ENCODE measurements at regions of chr6 and their contacts with region 1.

Region 1: GRCh38 chr6:42390228-42390934 is 61.3 kb downstream of the TRERF1 start:
- DNase-seq: peak in 8 of 9 donors; percentile 69 to 90 (median 82)
- ATAC-seq: peak; percentile 88
- H3K4me3 ChIP-seq: peak overlapping the region; percentile 50
- H3K4me3 Mint-ChIP-seq: peak overlapping the region; percentile 71 to 87 (median 84)
- H3K27ac ChIP-seq: peak overlapping the region; percentile 85
- H3K27ac Mint-ChIP-seq: peak overlapping the region; percentile 97 to 100 (median 99)
- H3K4me1 ChIP-seq: peaks cover 89% of the 10 kb centered on the region in 2 donors
- H3K4me1 Mint-ChIP-seq: peaks cover 75 to 100% (median 96%) of the 10 kb centered on the region in 7 donors
- H3K27me3 ChIP-seq: no peaks in the 10 kb centered on the region
- H3K27me3 Mint-ChIP-seq: no peaks in the 10 kb centered on the region

Region 2: DNA sequence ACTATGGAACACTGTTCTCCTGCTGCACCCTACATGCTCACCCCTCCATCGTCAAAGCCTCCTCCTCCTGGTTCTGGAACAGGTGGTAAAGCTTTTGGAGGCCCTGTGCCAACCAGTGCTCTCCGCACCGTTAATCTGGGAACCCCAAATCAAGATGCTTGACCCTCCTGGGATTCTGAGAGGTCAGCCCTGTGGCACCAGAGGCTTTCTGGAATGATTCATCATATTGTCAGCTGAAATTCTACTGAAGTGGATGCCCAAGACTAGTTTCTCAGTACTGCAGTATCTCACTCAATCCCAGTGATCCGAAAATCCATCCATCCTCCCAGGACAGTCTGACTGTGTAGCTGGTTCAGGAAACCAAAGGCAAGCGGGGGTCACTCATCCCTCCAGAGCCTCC is 31.4 kb before region 1 on chr6:
- CTCF ChIA-PET with region 1: interaction called, 4 read pairs
- POLR2A ChIA-PET with region 1: interaction called, 5 read pairs
- intact Hi-C with region 1: loop called in 1 of 2 experiments (anchors 5 kb)
- DNase-seq: no peak
- ATAC-seq: no peak
- H3K4me3 ChIP-seq: no peak overlapping the region
- H3K4me3 Mint-ChIP-seq: no peak overlapping the region
- H3K27ac ChIP-seq: no peak overlapping the region
- H3K27ac Mint-ChIP-seq: no peak overlapping the region
- H3K4me1 ChIP-seq: peaks cover 0 to 18% of the 10 kb centered on the region in 2 donors
- H3K4me1 Mint-ChIP-seq: peaks cover 1 to 36% (median 3%) of the 10 kb centered on the region in 7 donors
- H3K27me3 ChIP-seq: no peaks in the 10 kb centered on the region
- H3K27me3 Mint-ChIP-seq: no peaks in the 10 kb centered on the region

Region 3: DNA sequence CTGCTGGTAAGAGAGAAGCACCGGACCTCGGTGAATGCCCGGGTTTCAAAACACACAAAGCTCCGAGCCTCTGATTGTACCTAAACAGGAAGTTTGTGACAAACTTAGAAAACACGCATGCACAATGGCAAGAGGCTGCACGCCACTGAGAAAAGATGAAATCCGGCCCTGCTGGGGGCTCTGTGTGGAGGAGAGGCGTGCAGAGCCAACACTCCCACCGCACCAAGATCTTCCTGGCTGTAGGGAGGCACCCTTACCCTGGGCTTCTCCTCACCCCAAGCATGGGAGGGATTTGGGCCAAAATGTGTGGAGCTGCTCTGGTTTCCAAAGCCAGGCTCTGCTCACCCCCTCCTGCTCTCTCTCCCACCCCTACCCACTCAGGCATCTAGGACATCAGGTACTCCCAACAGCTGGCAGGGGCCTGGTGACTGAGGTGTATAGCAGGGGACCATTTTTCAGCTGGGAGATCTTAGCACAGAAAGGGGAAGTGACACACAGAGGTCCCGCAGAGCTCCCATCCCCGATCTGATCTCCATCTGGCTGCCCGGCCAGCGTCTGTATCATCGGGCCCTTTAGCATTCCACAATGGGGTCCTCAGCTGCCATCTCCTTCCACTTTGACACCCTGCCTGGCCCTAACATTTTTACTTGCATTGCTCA is 22.9 kb before region 1 on chr6:
- CTCF ChIA-PET with region 1: interaction called, 20 read pairs
- POLR2A ChIA-PET with region 1: interaction called, 114 read pairs
- intact Hi-C with region 1: loop called (anchors 1 kb)
- DNase-seq: peak in 4 of 9 donors; percentile 22 to 35 (median 32)
- ATAC-seq: peak; percentile 70
- H3K4me3 ChIP-seq: peak overlapping the region; percentile 42
- H3K4me3 Mint-ChIP-seq: peak overlapping the region; percentile 68 to 87 (median 80)
- H3K27ac ChIP-seq: peak overlapping the region; percentile 58
- H3K27ac Mint-ChIP-seq: peak overlapping the region; percentile 80 to 98 (median 94)
- H3K4me1 ChIP-seq: peaks cover 48 to 68% of the 10 kb centered on the region in 2 donors
- H3K4me1 Mint-ChIP-seq: peaks cover 63 to 84% (median 73%) of the 10 kb centered on the region in 7 donors
- H3K27me3 ChIP-seq: no peaks in the 10 kb centered on the region
- H3K27me3 Mint-ChIP-seq: no peaks in the 10 kb centered on the region

Region 4: GRCh38 chr6:42374018-42374659 is 16.2 kb before region 1 on chr6:
- CTCF ChIA-PET with region 1: interaction called, 38 read pairs
- POLR2A ChIA-PET with region 1: interaction called, 114 read pairs
- intact Hi-C with region 1: loop called in 1 of 2 experiments (anchors 1 kb)
- DNase-seq: no peak
- ATAC-seq: peak; percentile 58
- H3K4me3 ChIP-seq: no peak overlapping the region
- H3K4me3 Mint-ChIP-seq: peak overlapping the region; percentile 13 to 67 (median 53)
- H3K27ac ChIP-seq: no peak overlapping the region
- H3K27ac Mint-ChIP-seq: peak overlapping the region; percentile 61 to 94 (median 85)
- H3K4me1 ChIP-seq: peaks cover 36 to 63% of the 10 kb centered on the region in 2 donors
- H3K4me1 Mint-ChIP-seq: peaks cover 56 to 78% (median 64%) of the 10 kb centered on the region in 7 donors
- H3K27me3 ChIP-seq: no peaks in the 10 kb centered on the region
- H3K27me3 Mint-ChIP-seq: no peaks in the 10 kb centered on the region

Region 5: DNA sequence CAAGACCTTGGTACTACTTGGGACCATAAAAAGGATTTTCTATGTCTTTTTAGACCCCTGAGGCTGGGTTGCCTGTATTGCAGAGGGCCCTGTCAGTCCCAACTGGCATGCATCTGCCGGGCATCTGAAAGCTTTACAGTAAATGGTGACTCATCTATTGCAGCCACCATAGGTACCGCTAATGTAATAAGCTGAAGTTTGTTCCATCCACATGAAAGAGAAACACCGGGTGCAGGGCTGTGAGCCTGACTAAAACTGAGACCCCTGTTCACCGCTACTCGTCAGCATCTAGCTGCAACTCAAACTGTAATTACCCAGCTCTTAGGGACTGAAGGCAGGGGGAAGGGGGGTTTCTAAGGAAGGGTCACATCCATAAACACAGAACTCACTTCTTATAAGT is 11.8 kb after region 1 on chr6:
- CTCF ChIA-PET with region 1: interaction called, 7 read pairs
- POLR2A ChIA-PET with region 1: interaction called, 75 read pairs
- intact Hi-C with region 1: loop called in 1 of 2 experiments (anchors 1 kb)
- DNase-seq: peak in 1 of 9 donors; percentile 51
- ATAC-seq: peak; percentile 55
- H3K4me3 ChIP-seq: peak overlapping the region; percentile 21
- H3K4me3 Mint-ChIP-seq: peak overlapping the region in 5 of 10 donors; percentile 30 to 67 (median 49)
- H3K27ac ChIP-seq: no peak overlapping the region
- H3K27ac Mint-ChIP-seq: peak overlapping the region in 4 of 9 donors; percentile 51 to 89 (median 78)
- H3K4me1 ChIP-seq: peaks cover 29 to 51% of the 10 kb centered on the region in 2 donors
- H3K4me1 Mint-ChIP-seq: peaks cover 56 to 98% (median 91%) of the 10 kb centered on the region in 7 donors
- H3K27me3 ChIP-seq: no peaks in the 10 kb centered on the region
- H3K27me3 Mint-ChIP-seq: no peaks in the 10 kb centered on the region

Region 6: DNA sequence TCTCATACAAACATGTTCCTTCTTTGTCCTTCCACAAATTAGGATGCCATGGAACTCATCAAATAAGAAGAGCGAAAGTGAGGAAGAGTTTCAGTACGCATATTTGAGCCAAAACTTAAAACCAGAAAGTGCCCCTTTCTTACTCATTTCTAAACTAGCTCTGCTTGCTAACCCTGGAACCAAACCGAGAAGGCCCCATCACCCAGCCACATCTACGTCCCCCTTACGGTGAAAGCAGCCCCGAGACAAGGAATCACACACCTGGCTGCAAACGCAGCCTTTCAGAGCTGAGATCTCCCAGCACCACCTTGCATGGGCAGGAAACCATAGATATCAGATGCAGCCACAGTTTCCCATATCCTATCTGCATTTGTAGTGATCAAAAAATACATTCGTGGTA is 32.9 kb after region 1 on chr6:
- CTCF ChIA-PET with region 1: interaction called, 5 read pairs
- POLR2A ChIA-PET with region 1: interaction called, 14 read pairs
- intact Hi-C with region 1: no loop called
- DNase-seq: peak in 1 of 9 donors; percentile 21
- ATAC-seq: peak; percentile 26
- H3K4me3 ChIP-seq: peak overlapping the region; percentile 8
- H3K4me3 Mint-ChIP-seq: peak overlapping the region; percentile 54 to 88 (median 74)
- H3K27ac ChIP-seq: no peak overlapping the region
- H3K27ac Mint-ChIP-seq: peak overlapping the region in 8 of 9 donors; percentile 18 to 89 (median 68)
- H3K4me1 ChIP-seq: peaks cover 34 to 38% of the 10 kb centered on the region in 2 donors
- H3K4me1 Mint-ChIP-seq: peaks cover 46 to 80% (median 70%) of the 10 kb centered on the region in 7 donors
- H3K27me3 ChIP-seq: no peaks in the 10 kb centered on the region
- H3K27me3 Mint-ChIP-seq: no peaks in the 10 kb centered on the region

Region 7: DNA sequence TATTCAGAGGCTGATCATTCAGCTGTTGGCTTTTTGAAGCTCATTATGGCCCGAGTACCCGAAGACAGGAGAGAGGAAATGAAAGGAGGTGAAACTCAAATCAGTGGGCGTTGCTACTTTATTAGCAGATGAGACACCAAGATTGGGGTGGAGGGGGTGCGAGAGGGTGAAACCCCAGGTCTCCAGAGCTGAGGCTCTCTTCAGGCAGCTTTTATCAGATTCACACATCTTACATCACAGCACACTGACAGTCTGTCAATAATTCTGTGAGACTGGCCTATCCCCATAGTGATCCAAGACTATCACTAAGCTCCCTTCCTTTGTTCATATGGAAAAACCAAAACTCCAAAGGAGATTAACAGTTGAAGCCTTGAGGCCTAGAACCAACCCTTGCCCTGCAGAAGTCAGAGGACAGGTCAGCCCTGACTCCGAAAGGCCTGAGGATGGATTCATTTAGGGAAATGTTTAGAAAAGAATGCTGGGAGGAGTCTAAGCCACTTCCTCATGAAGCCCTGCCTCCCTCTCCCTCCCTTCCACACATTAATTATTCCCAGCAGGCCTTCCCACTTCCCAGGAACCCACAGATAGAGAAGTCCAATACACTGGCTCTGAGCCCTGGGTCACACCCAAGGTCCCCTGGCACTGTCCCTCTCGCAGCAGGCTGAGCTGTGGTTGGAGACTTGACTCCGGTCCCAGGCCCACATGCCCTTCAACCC is 38.1 kb after region 1 on chr6:
- CTCF ChIA-PET with region 1: interaction called, 5 read pairs
- POLR2A ChIA-PET with region 1: interaction called, 14 read pairs
- intact Hi-C with region 1: no loop called
- DNase-seq: no peak
- ATAC-seq: peak; percentile 86
- H3K4me3 ChIP-seq: peak overlapping the region; percentile 34
- H3K4me3 Mint-ChIP-seq: peak overlapping the region; percentile 2 to 73 (median 25)
- H3K27ac ChIP-seq: no peak overlapping the region
- H3K27ac Mint-ChIP-seq: peak overlapping the region in 8 of 9 donors; percentile 63 to 92 (median 78)
- H3K4me1 ChIP-seq: peaks cover 32 to 49% of the 10 kb centered on the region in 2 donors
- H3K4me1 Mint-ChIP-seq: peaks cover 37 to 69% (median 62%) of the 10 kb centered on the region in 7 donors
- H3K27me3 ChIP-seq: no peaks in the 10 kb centered on the region
- H3K27me3 Mint-ChIP-seq: no peaks in the 10 kb centered on the region

Region 8: DNA sequence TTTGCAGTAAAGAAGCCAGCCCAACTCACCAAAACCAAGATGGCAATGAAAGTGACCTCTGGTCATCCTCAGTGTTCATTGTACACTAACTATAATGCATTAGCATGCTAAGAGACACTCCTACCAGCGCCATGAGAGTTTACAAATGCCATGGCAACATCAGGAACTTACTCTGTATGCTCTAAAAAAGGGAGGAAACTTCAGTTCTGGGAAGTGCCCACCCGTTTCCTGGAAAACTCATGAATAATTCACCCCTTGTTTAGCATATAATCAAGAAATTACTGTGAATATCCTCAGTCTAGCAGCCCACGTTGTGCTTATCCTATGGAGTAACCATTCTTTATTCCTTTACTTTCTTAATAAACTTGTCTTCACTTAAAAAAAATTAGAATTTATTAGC is 80.8 kb after region 1 on chr6:
- CTCF ChIA-PET with region 1: no interaction called
- POLR2A ChIA-PET with region 1: no interaction called
- intact Hi-C with region 1: no loop called
- DNase-seq: no peak
- ATAC-seq: no peak
- H3K4me3 ChIP-seq: no peak overlapping the region
- H3K4me3 Mint-ChIP-seq: no peak overlapping the region
- H3K27ac ChIP-seq: no peak overlapping the region
- H3K27ac Mint-ChIP-seq: peak overlapping the region in 1 of 9 donors; percentile 21
- H3K4me1 ChIP-seq: no peaks in the 10 kb centered on the region
- H3K4me1 Mint-ChIP-seq: peaks cover 0 to 10% (median 0%) of the 10 kb centered on the region in 7 donors
- H3K27me3 ChIP-seq: no peaks in the 10 kb centered on the region
- H3K27me3 Mint-ChIP-seq: peaks cover 0 to 6% (median 0%) of the 10 kb centered on the region in 5 donors

Region 9: GRCh38 chr6:43468748-43469681 is 1078.6 kb after region 1 on chr6:
- CTCF ChIA-PET with region 1: no interaction called
- POLR2A ChIA-PET with region 1: no interaction called
- intact Hi-C with region 1: no loop called
- DNase-seq: no peak
- ATAC-seq: no peak
- H3K4me3 ChIP-seq: no peak overlapping the region
- H3K4me3 Mint-ChIP-seq: no peak overlapping the region
- H3K27ac ChIP-seq: no peak overlapping the region
- H3K27ac Mint-ChIP-seq: no peak overlapping the region
- H3K4me1 ChIP-seq: no peaks in the 10 kb centered on the region
- H3K4me1 Mint-ChIP-seq: no peaks in the 10 kb centered on the region
- H3K27me3 ChIP-seq: peaks cover 0 to 3% of the 10 kb centered on the region in 2 donors
- H3K27me3 Mint-ChIP-seq: peaks cover 12 to 24% (median 18%) of the 10 kb centered on the region in 5 donors